Mammary epithelial cell (primary cell): ENCODE measurements at regions of chr2 and their contacts with region 1.

Region 1: GRCh38 chr2:69724540-69725159 is 17.3 kb upstream of the ANXA4 start:
- DNase-seq: peak; percentile 64
- H3K4me3 ChIP-seq: peak overlapping the region in 1 of 3 experiments; percentile 29
- H3K27ac ChIP-seq: no peak overlapping the region
- H3K4me1 ChIP-seq: no peaks in the 10 kb centered on the region
- H3K27me3 ChIP-seq: no peaks in the 10 kb centered on the region
- CTCF ChIP-seq: peak; percentile 86 to 87

Region 2: GRCh38 chr2:69741619-69742466 is 17.2 kb after region 1 on chr2 and contains the start of gene ANXA4:
- CTCF ChIA-PET with region 1: interaction called, 34 read pairs
- dilution Hi-C with region 1: no loop called
- in situ Hi-C with region 1: no loop called
- intact Hi-C with region 1: loop called (anchors 2 kb)
- DNase-seq: peak; percentile 87
- H3K4me3 ChIP-seq: peak within 1 kb of the TSS; percentile 79 to 87 (median 83)
- H3K27ac ChIP-seq: peak within 1 kb of the TSS; percentile 84
- H3K4me1 ChIP-seq: peaks cover 25% of the 10 kb centered on the region
- H3K27me3 ChIP-seq: no peaks in the 10 kb centered on the region
- CTCF ChIP-seq: no peak
- total RNA-seq, gene ANXA4: 71.0 to 147 TPM

Region 3: GRCh38 chr2:69811018-69811417 is 86.4 kb after region 1 on chr2:
- CTCF ChIA-PET with region 1: interaction called, 45 read pairs
- dilution Hi-C with region 1: no loop called
- in situ Hi-C with region 1: loop called (anchors 5 kb)
- intact Hi-C with region 1: no loop called
- DNase-seq: no peak
- H3K4me3 ChIP-seq: no peak overlapping the region
- H3K27ac ChIP-seq: no peak overlapping the region
- H3K4me1 ChIP-seq: no peaks in the 10 kb centered on the region
- H3K27me3 ChIP-seq: no peaks in the 10 kb centered on the region
- CTCF ChIP-seq: no peak

Region 4: DNA sequence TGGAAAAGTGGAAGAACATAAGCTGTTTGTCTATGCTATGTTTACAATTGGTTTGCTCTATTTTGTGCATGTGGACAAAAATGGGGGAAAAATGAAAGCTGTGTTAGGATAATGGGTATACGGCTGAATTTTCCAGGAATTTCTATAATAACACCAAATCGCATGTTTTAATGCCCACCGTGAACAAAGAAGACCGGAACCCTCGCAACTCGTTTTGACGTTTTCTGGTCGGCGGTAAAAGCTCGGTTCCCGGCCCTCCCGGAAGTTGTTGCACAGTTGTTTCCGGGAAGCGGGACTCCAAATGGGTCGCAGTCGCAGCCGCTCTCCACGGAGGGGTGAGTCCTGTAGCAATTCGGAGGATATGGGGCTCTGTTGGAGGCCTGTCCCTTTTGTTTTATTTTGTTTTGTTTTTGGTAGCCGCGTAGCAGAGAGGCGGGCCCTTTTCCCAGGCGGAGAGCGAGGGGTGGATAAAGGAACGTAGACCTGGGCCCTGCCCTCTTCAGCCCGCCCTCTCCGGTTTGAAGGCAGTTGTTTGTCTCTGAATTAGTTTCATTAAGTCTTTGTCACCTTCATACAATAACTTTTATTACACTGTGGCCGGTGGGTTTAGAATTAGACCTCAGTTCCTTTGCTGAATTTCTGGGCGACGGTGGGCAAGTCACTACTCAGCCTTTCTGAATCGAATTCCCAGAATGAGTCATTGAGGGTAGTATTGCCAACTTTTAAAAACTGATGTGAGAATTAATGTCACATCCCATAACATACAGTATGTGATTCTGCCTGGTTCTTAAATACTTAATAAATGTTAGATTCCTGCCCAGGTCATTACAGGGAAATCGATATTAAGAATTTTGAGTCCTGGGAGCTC is 169.3 kb after region 1 on chr2 and contains the start of gene SNRNP27:
- CTCF ChIA-PET with region 1: interaction called, 9 read pairs
- dilution Hi-C with region 1: no loop called
- in situ Hi-C with region 1: no loop called
- intact Hi-C with region 1: loop called (anchors 1 kb)
- DNase-seq: peak; percentile 71
- H3K4me3 ChIP-seq: peak within 1 kb of the TSS; percentile 59 to 96 (median 96)
- H3K27ac ChIP-seq: peak within 1 kb of the TSS; percentile 94
- H3K4me1 ChIP-seq: peaks cover 10% of the 10 kb centered on the region
- H3K27me3 ChIP-seq: no peaks in the 10 kb centered on the region
- CTCF ChIP-seq: no peak
- total RNA-seq, gene SNRNP27: 25.3 to 51.2 TPM